Gastrocnemius medialis (tissue), 4 donors: ENCODE measurements at regions of chrX and their contacts with region 1.

Region 1: GRCh38 chrX:110002300-110003166 is at the start of gene TMEM164:
- DNase-seq: peak; percentile 72 to 78
- ATAC-seq: peak; percentile 71 to 76
- H3K4me3 ChIP-seq: peak within 1 kb of the TSS; percentile 63 to 72 (median 71)
- H3K27ac ChIP-seq: peak within 1 kb of the TSS; percentile 88 to 92 (median 91)
- H3K4me1 ChIP-seq: peaks cover 17 to 18% of the 10 kb centered on the region in 2 donors
- H3K27me3 ChIP-seq: no peaks in the 10 kb centered on the region
- CTCF ChIP-seq: peak in 2 of 5 experiments; percentile 17 to 38
- POLR2A ChIP-seq: peak; percentile 46 to 63
- total RNA-seq, gene TMEM164: 40.1 to 61.2 (median 47.3) TPM

Region 2: DNA sequence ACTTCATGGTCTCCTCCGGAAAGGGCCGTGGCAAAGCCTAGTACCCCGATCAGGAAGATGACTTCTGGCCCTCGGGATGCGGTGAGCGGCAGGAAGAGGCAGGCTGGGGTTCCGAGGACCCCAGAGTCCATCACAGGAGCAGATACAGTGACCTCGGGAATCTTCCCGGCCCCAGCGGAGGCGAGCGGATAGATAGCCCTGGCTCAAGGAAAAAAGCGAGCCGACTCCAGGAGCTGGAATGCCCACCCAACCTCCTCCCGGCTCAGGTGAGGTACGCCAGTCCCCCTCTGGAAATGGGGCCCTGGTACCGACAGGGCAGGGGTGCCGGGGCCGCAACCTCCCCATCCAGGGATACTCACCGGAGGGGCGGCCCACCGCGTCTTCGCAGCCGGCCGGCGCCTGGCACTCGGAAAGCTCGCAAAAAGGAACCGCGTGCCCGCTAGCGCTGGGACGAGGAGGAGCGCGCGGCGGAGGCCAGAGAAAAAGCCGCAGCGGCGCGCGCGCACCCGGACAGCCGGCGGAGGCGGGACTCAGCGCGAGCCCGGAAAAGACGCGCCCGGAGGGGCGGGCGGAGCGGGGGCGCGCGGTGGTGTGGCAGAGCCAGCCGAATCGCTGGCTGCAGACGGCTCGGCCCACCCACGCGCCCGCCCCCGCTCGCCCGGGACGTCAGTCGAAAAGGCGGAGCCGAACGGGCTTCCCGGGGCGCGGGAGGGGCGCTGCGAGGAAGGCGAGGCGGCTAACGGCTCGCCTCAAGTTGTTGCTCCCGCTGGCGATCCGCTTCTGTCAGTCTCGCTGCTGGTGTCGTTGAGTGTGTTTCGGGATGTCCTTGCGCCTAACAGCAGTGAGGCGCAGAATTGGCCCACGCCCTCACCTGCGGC is 269.5 kb before region 1 on chrX and contains the start of gene ACSL4:
- in situ Hi-C with region 1: no loop called
- intact Hi-C with region 1: loop called (anchors 5 kb)
- DNase-seq: peak; percentile 65 to 80
- ATAC-seq: peak; percentile 74 to 85
- H3K4me3 ChIP-seq: peak within 1 kb of the TSS; percentile 62 to 85 (median 80)
- H3K27ac ChIP-seq: peak within 1 kb of the TSS; percentile 82 to 91 (median 86)
- H3K4me1 ChIP-seq: peaks cover 0 to 5% of the 10 kb centered on the region in 2 donors
- H3K27me3 ChIP-seq: no peaks in the 10 kb centered on the region
- CTCF ChIP-seq: no peak
- POLR2A ChIP-seq: peak; percentile 70 to 86
- total RNA-seq, gene ACSL4: 18.7 to 259 (median 132) TPM

Region 3: DNA sequence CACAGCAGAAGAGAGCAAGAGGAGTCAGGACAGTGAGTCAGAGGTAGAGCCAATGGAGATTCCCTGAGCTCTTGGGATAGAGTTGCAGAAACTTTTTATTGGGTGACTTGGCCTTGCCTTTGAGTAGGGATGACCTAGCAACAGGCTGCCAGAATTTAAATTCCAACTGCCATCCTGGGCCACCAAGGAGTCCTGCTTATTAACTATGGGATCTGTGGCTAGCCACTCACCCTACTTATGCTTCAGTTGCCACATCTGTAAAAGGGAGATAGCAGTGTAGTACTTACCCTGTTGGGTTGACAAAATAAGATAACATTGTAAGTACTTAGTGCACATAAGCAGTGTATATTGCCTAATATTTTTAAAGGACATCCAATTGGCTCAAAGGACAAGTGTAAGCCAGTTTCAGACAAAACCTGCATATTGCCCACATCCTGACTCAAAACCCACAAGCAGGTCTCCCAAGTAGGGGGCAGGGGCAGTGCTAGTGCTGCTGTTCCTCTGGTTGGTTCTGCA is 43.1 kb before region 1 on chrX:
- in situ Hi-C with region 1: no loop called
- intact Hi-C with region 1: loop called (anchors 5 kb)
- DNase-seq: no peak
- ATAC-seq: peak in 1 of 2 donors; percentile 58
- H3K4me3 ChIP-seq: no peak overlapping the region
- H3K27ac ChIP-seq: no peak overlapping the region
- H3K4me1 ChIP-seq: no peaks in the 10 kb centered on the region
- H3K27me3 ChIP-seq: no peaks in the 10 kb centered on the region
- CTCF ChIP-seq: no peak
- POLR2A ChIP-seq: no peak

Region 4: GRCh38 chrX:110125446-110126162 is 123.1 kb after region 1 on chrX:
- in situ Hi-C with region 1: no loop called
- intact Hi-C with region 1: loop called (anchors 5 kb)
- DNase-seq: no peak
- ATAC-seq: peak in 1 of 2 donors; percentile 51
- H3K4me3 ChIP-seq: no peak overlapping the region
- H3K27ac ChIP-seq: peak overlapping the region; percentile 50 to 69 (median 52)
- H3K4me1 ChIP-seq: peaks cover 3 to 26% of the 10 kb centered on the region in 2 donors
- H3K27me3 ChIP-seq: no peaks in the 10 kb centered on the region
- CTCF ChIP-seq: peak in 1 of 5 experiments; percentile 17
- POLR2A ChIP-seq: no peak

Region 5: DNA sequence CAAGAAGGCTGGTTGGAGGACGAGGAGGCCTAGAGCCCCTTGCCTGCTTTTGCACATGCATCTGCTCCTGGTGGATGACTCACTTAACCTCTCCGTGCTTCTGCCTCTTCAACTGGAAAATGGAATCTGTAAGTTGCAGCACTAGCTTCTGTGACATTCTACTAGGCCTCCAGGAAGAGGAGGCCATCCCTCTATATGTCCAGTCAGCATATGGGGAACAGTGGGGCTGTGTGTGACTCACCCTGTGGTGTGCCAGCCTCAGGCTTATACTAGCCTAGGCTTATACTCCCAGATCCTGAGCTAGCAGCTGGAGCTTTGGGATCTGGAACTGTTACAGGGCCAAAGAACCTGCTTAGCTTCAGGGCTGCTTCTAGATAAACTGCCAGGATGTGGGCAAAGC is 392.1 kb after region 1 on chrX:
- in situ Hi-C with region 1: no loop called
- intact Hi-C with region 1: loop called (anchors 5 kb)
- DNase-seq: no peak
- ATAC-seq: no peak
- H3K4me3 ChIP-seq: no peak overlapping the region
- H3K27ac ChIP-seq: no peak overlapping the region
- H3K4me1 ChIP-seq: peaks cover 0 to 3% of the 10 kb centered on the region in 2 donors
- H3K27me3 ChIP-seq: peaks cover 0 to 8% (median 0%) of the 10 kb centered on the region in 3 donors
- CTCF ChIP-seq: no peak
- POLR2A ChIP-seq: no peak

Region 6: DNA sequence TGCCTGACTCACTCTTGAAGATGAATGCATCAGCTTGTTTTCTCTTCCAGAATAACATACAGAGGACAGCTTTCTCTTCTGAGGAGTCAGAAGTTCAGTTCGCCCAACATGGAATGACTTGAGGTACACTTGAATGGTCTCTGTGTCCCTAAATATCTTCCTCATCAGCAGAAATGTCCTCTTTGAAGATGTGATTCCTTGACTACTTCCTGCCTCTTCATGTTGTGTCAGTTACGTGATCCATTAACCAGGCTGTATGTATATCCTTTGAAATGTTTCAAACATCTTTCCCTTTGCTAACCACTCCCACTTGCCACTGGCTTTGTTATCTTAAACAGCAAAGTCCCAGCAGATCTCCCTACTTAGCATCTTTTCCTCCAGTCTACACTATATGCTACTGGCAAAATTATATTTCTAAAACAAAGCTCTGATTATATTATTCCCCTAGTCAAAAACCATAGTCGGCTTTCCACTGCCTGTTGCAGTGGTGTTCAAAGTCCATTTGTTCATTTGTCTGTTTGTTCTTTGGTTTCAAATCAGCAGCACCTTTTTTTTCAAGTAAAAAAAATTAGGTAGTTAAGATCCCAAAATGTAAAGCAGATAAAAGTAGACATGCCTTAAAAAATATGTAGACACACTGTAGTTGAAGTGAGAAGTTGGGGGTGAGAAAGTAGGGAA is 1011.4 kb after region 1 on chrX:
- in situ Hi-C with region 1: no loop called
- intact Hi-C with region 1: no loop called
- DNase-seq: no peak
- ATAC-seq: no peak
- H3K4me3 ChIP-seq: no peak overlapping the region
- H3K27ac ChIP-seq: no peak overlapping the region
- H3K4me1 ChIP-seq: no peaks in the 10 kb centered on the region
- H3K27me3 ChIP-seq: peaks cover 0 to 5% (median 4%) of the 10 kb centered on the region in 3 donors
- CTCF ChIP-seq: no peak
- POLR2A ChIP-seq: no peak